H1 (cell line): ENCODE measurements at regions of chr20 and their contacts with region 1.

Region 1: GRCh38 chr20:19205977-19206396 is 6.5 kb upstream of the SLC24A3 start:
- DNase-seq: peak in 1 of 2 experiments; percentile 98
- H3K4me3 ChIP-seq: no peak overlapping the region
- H3K27ac ChIP-seq: no peak overlapping the region
- H3K4me1 ChIP-seq: peaks cover 9 to 25% (median 14%) of the 10 kb centered on the region in 4 experiments
- H3K27me3 ChIP-seq: peaks cover 0 to 2% (median 0%) of the 10 kb centered on the region in 4 experiments; a peak in 2 of 7 replicates
- CTCF ChIP-seq: peak; percentile 89 to 93 (median 89)
- EP300 ChIP-seq: no peak
- POLR2A ChIP-seq: no peak
- RAD21 ChIP-seq: peak; percentile 89 to 93

Region 2: GRCh38 chr20:19218411-19218810 is 12.4 kb after region 1 on chr20:
- CTCF ChIA-PET with region 1: interaction called, 18 read pairs
- POLR2A ChIA-PET with region 1: interaction called, 3 read pairs
- DNase-seq: no peak
- H3K4me3 ChIP-seq: no peak overlapping the region
- H3K27ac ChIP-seq: no peak overlapping the region
- H3K4me1 ChIP-seq: peaks cover 0 to 8% (median under 1%) of the 10 kb centered on the region in 4 experiments; a peak in 2 of 7 replicates
- H3K27me3 ChIP-seq: peaks cover 0 to 8% (median 7%) of the 10 kb centered on the region in 4 experiments; a peak in 6 of 7 replicates
- CTCF ChIP-seq: no peak
- EP300 ChIP-seq: no peak
- POLR2A ChIP-seq: no peak
- RAD21 ChIP-seq: no peak

Region 3: GRCh38 chr20:19571996-19572395 is 366.0 kb after region 1 on chr20:
- CTCF ChIA-PET with region 1: interaction called, 11 read pairs
- POLR2A ChIA-PET with region 1: no interaction called
- DNase-seq: no peak
- H3K4me3 ChIP-seq: no peak overlapping the region
- H3K27ac ChIP-seq: no peak overlapping the region
- H3K4me1 ChIP-seq: no peaks in the 10 kb centered on the region
- H3K27me3 ChIP-seq: no peaks in the 10 kb centered on the region
- CTCF ChIP-seq: no peak
- EP300 ChIP-seq: no peak
- POLR2A ChIP-seq: no peak
- RAD21 ChIP-seq: no peak